ENCODE measurements at regions of chr4 and their contacts with region 1.

Region 1: GRCh38 chr4:137678796-137679195 is 146.5 kb upstream of the PCDH18 start:
- DNase-seq: no peak
- ATAC-seq: no peak
- H3K4me3 ChIP-seq: no peak overlapping the region
- H3K27ac ChIP-seq: no peak overlapping the region
- H3K4me1 ChIP-seq: no peaks in the 10 kb centered on the region
- H3K27me3 ChIP-seq: no peaks in the 10 kb centered on the region
- CTCF ChIP-seq: no peak
- EP300 ChIP-seq: no peak
- POLR2A ChIP-seq: no peak
- RAD21 ChIP-seq: no peak

Region 2: GRCh38 chr4:137647375-137647774 is 31.4 kb before region 1 on chr4:
- CTCF ChIA-PET with region 1: no interaction called
- POLR2A ChIA-PET with region 1: no interaction called
- in situ Hi-C with region 1: no loop called
- intact Hi-C with region 1: loop called (anchors 1 kb)
- DNase-seq: no peak
- ATAC-seq: no peak
- H3K4me3 ChIP-seq: no peak overlapping the region
- H3K27ac ChIP-seq: no peak overlapping the region
- H3K4me1 ChIP-seq: no peaks in the 10 kb centered on the region
- H3K27me3 ChIP-seq: no peaks in the 10 kb centered on the region; a peak in 1 of 5 replicates
- CTCF ChIP-seq: no peak
- EP300 ChIP-seq: no peak
- POLR2A ChIP-seq: no peak
- RAD21 ChIP-seq: no peak

Region 3: GRCh38 chr4:137738375-137738990 is 59.7 kb after region 1 on chr4:
- CTCF ChIA-PET with region 1: no interaction called
- POLR2A ChIA-PET with region 1: no interaction called
- in situ Hi-C with region 1: no loop called
- intact Hi-C with region 1: no loop called
- DNase-seq: no peak
- ATAC-seq: no peak
- H3K4me3 ChIP-seq: no peak overlapping the region
- H3K27ac ChIP-seq: no peak overlapping the region
- H3K4me1 ChIP-seq: no peaks in the 10 kb centered on the region
- H3K27me3 ChIP-seq: no peaks in the 10 kb centered on the region
- CTCF ChIP-seq: no peak
- EP300 ChIP-seq: no peak
- POLR2A ChIP-seq: no peak
- RAD21 ChIP-seq: no peak

Measured in HepG2 (cell line).